MCF 10A (cell line): ENCODE measurements at regions of chr1 and their contacts with region 1.

Region 1: DNA sequence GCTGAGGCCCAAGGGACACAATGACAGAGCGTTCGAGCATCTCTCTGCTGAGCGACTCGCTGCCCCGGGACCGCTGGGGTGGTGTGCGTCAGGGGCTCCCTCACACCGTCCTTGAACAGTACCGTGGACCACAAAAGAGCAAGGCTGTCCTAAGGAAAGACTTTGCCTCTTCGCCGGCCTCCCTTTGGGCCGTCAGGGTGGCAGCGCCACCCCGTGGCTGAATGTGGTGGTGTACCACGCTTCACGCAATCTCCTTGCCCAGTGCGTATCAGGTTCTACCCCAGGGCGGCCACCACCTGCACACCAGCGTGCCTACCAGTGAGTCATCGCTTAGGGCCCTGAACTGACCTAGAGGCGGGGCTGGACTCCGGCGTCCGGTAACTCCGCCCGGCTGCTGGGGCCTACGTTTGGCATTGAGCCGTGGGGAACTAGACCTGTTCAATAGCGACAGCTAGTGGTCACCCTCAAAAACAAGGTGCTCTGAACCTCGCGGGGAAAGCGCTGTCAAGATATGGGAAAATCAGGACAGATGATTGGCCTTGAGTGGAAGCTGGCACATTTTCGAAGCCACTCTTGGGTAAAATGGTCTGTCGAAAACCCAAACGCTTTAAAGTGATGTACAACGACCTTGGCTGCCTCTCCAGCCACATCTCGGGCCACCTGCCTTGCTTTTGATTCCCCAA is 8.1 kb upstream of the TRAF3IP3 start:
- DNase-seq: peak; percentile 100
- H3K4me3 Mint-ChIP-seq: no peak overlapping the region
- H3K27ac Mint-ChIP-seq: no peak overlapping the region
- H3K4me1 Mint-ChIP-seq: peaks cover 23% of the 10 kb centered on the region
- H3K27me3 Mint-ChIP-seq: no peaks in the 10 kb centered on the region
- CTCF ChIP-seq: peak; percentile 98

Region 2: DNA sequence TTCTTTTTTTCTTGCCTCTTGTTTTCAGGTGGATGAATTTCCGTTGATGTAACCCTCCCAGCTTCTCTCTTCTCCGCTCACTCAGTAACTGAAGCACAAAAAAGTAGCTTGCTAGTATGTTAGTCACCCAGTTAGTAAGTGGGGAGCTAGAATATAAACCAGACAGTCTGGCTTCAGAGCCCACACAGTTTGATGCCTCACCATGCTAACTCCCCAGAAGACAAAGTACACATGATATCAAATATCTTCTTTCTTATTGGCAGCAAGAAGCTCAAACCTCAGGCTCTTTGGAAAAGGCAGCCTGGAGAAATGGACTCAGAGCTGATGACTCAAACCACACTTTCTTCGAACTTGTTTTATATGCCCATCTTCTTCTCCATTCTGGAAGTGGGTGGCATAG is 1316.0 kb before region 1 on chr1:
- CTCF ChIA-PET with region 1: no interaction called
- POLR2A ChIA-PET with region 1: no interaction called
- intact Hi-C with region 1: no loop called
- DNase-seq: peak; percentile 71
- H3K4me3 Mint-ChIP-seq: no peak overlapping the region
- H3K27ac Mint-ChIP-seq: no peak overlapping the region
- H3K4me1 Mint-ChIP-seq: peaks cover 8% of the 10 kb centered on the region
- H3K27me3 Mint-ChIP-seq: no peaks in the 10 kb centered on the region
- CTCF ChIP-seq: no peak

Region 3: GRCh38 chr1:209601809-209602657 is 145.7 kb before region 1 on chr1:
- CTCF ChIA-PET with region 1: interaction called, 207 read pairs
- POLR2A ChIA-PET with region 1: interaction called, 6 read pairs
- intact Hi-C with region 1: loop called (anchors 1 kb)
- DNase-seq: peak; percentile 90
- H3K4me3 Mint-ChIP-seq: no peak overlapping the region
- H3K27ac Mint-ChIP-seq: no peak overlapping the region
- H3K4me1 Mint-ChIP-seq: no peaks in the 10 kb centered on the region
- H3K27me3 Mint-ChIP-seq: no peaks in the 10 kb centered on the region
- CTCF ChIP-seq: peak; percentile 92

Region 4: DNA sequence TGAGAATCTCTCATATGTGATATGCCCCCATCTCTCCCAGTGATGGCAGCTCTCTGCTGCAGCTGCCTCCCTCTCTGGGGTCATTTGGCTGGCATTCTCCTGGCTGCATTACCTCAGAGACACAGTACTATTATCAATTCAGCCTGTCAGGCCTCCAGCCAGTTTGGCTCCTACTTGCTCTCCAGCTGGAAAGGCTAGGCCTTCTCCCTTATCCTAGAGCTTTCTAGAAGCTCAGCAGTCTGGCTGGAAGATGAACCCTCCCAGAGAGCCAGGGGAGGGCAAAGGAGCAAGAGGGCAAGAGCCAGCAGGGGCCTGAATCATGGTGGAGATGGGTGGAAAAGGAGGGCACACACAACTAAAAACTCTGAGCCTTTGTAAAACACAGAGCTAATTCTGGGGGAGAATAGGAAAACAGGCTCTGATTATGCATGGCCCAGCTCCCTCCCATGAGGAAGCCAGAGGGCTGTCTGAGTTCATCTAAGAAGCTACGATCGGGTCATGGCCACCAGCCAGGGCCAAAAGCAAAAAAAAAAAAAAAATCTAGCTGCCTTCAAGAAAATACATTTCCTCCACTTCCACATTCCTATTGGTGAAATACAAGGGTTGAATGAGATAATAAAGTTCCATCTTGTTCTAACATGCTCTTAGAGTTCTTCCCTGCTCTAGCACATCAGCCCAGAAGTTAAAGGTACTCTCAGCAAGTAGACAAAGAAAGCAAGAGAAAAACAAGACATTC is 104.3 kb before region 1 on chr1:
- CTCF ChIA-PET with region 1: interaction called, 21 read pairs
- POLR2A ChIA-PET with region 1: no interaction called
- intact Hi-C with region 1: no loop called
- DNase-seq: peak; percentile 61
- H3K4me3 Mint-ChIP-seq: peak overlapping the region; percentile 24
- H3K27ac Mint-ChIP-seq: peak overlapping the region; percentile 68
- H3K4me1 Mint-ChIP-seq: peaks cover 69% of the 10 kb centered on the region
- H3K27me3 Mint-ChIP-seq: no peaks in the 10 kb centered on the region
- CTCF ChIP-seq: no peak

Region 5: DNA sequence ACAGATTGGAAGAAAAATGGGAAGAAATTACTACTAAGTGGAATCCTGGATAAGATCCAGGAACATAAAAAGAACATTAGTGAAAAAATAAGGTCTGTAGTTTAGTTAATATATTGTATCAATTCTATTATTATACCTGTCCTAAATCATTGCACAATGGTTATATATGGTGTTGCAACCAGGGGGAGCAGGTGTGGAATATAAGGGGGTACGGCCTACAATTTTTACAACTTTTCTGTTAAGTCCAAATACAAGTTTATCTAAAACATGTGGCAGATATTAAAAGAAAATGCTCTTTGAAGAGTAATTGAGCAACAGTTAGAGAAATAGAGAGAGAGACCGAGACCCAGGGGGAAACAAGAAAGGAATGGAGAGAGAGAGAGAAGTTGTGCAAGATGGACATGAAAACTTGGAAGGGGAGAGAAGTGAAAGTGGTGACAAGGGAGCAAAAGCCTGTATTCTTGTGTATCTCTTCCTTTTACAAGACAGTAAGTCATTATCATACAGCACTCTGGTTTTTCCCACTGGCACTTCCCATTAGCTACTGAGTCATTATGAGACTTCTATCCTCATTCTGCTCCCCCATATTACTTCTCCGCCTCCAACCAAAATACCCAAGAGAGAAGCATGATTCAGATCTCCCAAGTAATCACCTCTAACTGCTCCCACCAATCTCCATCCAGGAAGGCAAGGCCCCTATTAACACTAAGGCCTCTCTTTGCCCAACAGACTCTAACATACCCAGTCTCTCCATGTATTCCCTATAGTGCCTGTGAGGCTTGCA is 14.1 kb before region 1 on chr1:
- CTCF ChIA-PET with region 1: interaction called, 227 read pairs
- POLR2A ChIA-PET with region 1: interaction called, 3 read pairs
- intact Hi-C with region 1: no loop called
- DNase-seq: no peak
- H3K4me3 Mint-ChIP-seq: no peak overlapping the region
- H3K27ac Mint-ChIP-seq: no peak overlapping the region
- H3K4me1 Mint-ChIP-seq: peaks cover 4% of the 10 kb centered on the region
- H3K27me3 Mint-ChIP-seq: no peaks in the 10 kb centered on the region
- CTCF ChIP-seq: no peak

Region 6: DNA sequence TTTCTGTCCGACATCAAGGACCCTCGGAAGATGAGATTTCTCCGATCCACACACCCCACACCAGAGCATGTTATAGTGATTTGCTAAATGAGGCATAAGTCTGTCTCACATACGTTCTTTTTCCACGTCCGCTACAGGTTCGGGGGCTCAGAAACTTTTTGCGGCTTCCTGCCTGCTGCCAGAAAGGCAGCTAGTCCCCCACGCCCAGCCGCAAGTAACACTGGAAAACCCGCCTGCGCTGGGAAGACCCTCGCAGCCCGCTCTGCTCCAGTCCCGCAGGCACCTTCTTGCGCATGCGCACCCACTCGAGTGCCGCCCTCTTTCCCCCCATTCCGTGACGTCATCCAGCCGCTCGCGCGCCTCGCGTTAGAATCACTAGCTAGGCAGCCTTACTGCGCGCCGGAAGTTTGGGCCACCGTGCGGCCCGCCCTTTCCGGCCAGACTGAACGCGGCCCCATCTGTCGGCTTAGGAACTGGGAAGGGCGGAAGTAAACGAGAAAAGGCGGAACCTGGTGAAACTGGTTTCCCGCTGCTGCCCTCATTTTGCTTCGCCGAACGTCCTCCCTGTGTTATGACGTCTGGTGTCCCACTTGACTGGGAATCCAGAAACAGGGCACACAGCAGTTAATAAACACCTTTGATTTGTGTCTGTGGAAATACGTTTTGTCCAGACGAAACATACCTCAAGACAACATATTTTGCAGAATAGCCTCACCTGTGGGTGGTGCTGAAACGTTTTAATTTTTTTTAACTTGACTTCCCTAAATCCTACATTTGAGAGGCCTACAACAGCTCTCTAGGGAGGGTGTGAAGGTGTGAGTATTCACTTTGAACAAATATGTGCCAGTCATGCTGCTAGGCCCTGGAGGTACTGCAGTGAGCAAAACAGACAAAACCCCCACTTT is 36.8 kb after region 1 on chr1 and contains the start of gene C1orf74:
- CTCF ChIA-PET with region 1: interaction called, 14 read pairs
- POLR2A ChIA-PET with region 1: interaction called, 4 read pairs
- intact Hi-C with region 1: loop called (anchors 1 kb)
- DNase-seq: peak; percentile 100
- H3K4me3 Mint-ChIP-seq: peak within 1 kb of the TSS; percentile 90
- H3K27ac Mint-ChIP-seq: peak within 1 kb of the TSS; percentile 96
- H3K4me1 Mint-ChIP-seq: peaks cover 22% of the 10 kb centered on the region
- H3K27me3 Mint-ChIP-seq: no peaks in the 10 kb centered on the region
- CTCF ChIP-seq: no peak
- total RNA-seq, gene C1orf74: 6.8 and 7.1 TPM in 2 replicates